Dendritic cell treated with granulocyte-macrophage colony-stimulating factor and Interleukin-4, amounts not matched to agents 40 ng/mL and 50 ng/mL, for 4 days (primary cell): ENCODE measurements at regions of chr17 and their contacts with region 1.

Region 1: DNA sequence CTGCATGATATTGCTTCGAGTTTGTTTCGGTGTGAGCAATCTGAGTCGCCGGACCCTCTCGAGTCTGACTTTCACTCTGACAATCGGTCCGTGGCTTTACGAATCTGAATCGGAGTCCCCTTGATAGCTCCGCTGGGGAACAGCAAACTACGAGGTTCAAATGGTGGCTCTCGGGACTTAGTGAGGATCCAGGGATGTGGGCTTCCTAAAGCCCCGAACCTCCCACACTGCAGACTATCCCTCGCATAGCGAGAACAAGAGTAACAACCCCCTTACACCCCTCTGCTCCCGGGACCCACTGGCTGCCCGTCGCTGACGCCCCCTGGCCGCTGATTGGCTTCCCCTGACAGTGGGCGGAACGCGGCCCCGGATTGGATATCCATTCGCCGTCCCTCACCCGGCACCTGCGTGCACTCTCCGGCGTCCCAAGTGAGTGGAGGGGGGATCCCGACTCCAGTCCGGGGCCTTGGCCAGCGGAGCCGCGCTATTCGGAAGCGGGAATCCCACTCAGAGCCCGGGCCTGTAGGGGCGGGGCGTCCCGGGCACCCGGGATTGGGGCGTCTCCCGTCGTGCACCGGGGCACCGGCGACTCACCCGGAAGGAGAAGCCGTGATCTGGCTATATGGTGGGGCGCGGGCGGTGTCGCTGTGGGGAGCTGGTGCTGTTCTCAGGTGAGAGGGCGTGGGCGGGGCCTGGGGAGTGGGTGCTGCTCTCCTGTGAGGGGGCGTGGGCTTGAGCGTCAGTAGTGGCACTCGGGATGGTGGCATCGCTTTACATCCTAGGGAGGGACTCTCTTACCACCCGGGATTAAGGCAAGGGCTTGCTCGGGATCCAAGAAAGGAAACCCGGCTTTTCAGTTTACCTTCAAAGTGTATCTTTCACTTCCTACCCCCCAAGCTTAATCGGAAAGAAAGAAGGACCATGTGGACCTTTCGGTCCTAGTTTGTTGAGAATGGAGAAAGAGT is at the start of gene SNX11:
- H3K4me3 Mint-ChIP-seq: peak within 1 kb of the TSS; percentile 95
- H3K27ac Mint-ChIP-seq: peak within 1 kb of the TSS; percentile 96
- H3K4me1 Mint-ChIP-seq: peaks cover 73% of the 10 kb centered on the region
- H3K27me3 Mint-ChIP-seq: no peaks in the 10 kb centered on the region

Region 2: GRCh38 chr17:48047741-48048383 is 59.6 kb before region 1 on chr17 and contains the start of gene NFE2L1:
- intact Hi-C with region 1: loop called (anchors 2 kb)
- H3K4me3 Mint-ChIP-seq: peak within 1 kb of the TSS; percentile 85
- H3K27ac Mint-ChIP-seq: peak within 1 kb of the TSS; percentile 95
- H3K4me1 Mint-ChIP-seq: peaks cover 59% of the 10 kb centered on the region
- H3K27me3 Mint-ChIP-seq: peaks cover under 1% of the 10 kb centered on the region